ENCODE measurements at regions of chr5 and their contacts with region 1.

Region 1: DNA sequence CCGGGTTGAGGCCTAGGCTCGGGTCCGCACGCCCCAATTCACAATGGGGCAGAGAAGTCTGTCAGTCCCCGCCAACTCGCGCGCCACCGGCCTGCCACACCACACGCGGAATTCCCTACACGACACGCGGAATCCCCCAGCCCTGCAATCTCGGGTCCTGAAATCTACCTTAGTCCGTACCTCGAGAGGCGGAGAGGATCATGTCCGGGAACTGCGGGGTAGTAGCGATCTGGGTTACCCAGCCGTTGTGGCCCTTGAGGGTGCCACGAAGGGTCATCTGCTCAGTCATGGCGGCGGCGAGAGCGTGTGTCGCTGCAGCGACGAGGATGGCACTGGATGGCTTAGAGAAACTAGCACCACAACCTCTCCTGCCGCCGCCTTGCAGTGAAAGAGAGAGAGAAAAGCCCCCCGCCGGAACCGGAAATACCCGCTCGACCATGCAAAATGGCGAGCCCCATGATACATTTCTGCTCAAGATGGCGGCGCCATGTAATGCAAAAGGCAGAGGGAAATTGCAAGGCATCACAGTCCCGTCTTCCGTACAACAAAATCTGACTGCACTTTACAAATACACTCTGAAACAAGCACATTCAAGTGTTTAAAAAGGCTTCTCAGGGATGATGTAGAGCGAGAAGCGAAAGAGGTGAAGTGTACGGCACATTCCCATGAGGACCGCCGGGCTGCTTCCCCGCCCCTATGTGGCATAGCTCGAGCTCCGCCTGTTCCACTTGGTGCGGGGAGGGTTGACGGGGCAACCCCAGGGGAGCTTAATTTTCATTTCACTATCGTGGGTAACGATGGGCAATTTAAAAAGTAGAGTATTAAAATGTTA is at the start of gene RACK1:
- DNase-seq: peak; percentile 87 to 89
- ATAC-seq: peak; percentile 60 to 72
- H3K4me3 ChIP-seq: peak within 1 kb of the TSS; percentile 76 to 96 (median 80)
- H3K27ac ChIP-seq: peak within 1 kb of the TSS; percentile 94 to 99 (median 96)
- H3K4me1 ChIP-seq: peaks cover 39 to 50% of the 10 kb centered on the region in 2 donors
- H3K27me3 ChIP-seq: no peaks in the 10 kb centered on the region
- CTCF ChIP-seq: peak in 2 of 5 experiments; percentile 11 to 13
- POLR2A ChIP-seq: peak; percentile 79 to 81
- total RNA-seq, gene RACK1: 1,697 to 2,187 (median 1,957) TPM

Region 2: GRCh38 chr5:179732417-179732917 is 1511.3 kb before region 1 on chr5 and contains the start of gene MAML1:
- in situ Hi-C with region 1: no loop called
- intact Hi-C with region 1: loop called (anchors 5 kb)
- DNase-seq: peak; percentile 100
- ATAC-seq: peak; percentile 94 to 96
- H3K4me3 ChIP-seq: peak within 1 kb of the TSS; percentile 59 to 86 (median 72)
- H3K27ac ChIP-seq: peak within 1 kb of the TSS; percentile 79 to 97 (median 92)
- H3K4me1 ChIP-seq: peaks cover 37 to 40% of the 10 kb centered on the region in 2 donors
- H3K27me3 ChIP-seq: no peaks in the 10 kb centered on the region
- CTCF ChIP-seq: no peak
- POLR2A ChIP-seq: peak; percentile 63 to 77
- total RNA-seq, gene MAML1: 14.4 to 16.3 (median 15.1) TPM

Region 3: DNA sequence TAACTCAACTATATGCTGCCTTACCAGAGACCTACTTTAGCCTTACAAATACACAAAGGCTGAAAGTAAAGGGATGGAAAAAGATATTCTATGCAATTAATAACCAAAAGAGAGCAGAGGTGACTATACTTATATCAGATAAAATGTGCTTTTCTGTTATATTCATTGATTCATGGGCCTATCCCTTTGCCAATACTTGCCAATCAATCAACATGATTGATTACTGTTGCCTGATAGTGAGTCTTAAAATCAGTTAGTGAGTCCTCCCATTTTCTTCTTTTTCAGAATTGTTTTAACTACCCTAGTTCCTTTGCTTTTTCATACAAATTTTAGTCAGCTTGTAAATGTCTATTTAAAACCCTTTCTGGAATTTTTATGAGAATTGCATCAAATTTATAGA is 480.5 kb before region 1 on chr5:
- in situ Hi-C with region 1: no loop called
- intact Hi-C with region 1: no loop called
- DNase-seq: no peak
- ATAC-seq: no peak
- H3K4me3 ChIP-seq: no peak overlapping the region
- H3K27ac ChIP-seq: no peak overlapping the region
- H3K4me1 ChIP-seq: no peaks in the 10 kb centered on the region
- H3K27me3 ChIP-seq: no peaks in the 10 kb centered on the region
- CTCF ChIP-seq: no peak
- POLR2A ChIP-seq: no peak

Region 4: DNA sequence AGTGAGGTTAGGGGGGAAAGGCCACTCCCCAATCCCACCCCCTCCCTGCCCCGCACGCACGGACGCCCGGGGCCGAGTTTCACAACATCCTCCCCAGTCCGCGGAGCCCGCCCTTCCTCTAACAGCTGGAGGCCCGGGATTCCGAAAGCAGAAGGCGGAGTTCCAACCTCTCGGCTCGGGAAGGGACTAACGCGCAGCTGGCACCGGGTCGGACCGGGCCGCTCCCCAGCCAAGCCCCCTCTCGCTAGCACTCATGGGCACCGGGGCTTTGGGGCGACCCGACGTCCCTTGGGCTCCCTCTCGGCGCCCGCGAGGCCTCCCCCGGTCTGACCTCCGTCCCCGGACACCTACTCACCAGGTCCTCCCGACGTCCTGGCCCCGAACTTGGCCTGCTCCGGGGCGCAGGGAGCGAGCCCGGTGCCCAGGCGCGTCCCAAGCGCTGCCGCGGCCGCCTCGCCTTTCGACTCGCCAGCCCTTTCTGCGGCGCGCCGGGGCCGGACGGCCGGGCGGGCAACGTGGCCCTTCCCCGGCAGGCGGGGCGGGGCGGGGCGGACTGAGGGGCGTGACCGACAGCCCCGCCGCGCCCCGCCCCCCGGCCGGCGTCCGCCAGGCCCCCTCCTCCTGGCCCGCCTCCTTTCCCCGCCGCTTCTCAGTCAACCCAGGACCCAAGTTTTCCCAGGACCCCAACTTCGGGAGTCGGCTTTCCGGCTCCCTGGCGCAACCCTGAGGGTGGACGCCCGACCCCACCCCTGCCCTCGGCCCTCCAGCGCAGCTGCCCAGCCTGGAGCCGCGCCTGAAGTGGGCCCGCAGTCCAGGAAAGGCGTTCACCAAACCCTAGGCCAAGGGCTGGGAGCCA is 441.2 kb before region 1 on chr5 and contains the start of gene MGAT1:
- in situ Hi-C with region 1: no loop called
- intact Hi-C with region 1: loop called (anchors 5 kb)
- DNase-seq: peak; percentile 81 to 85
- ATAC-seq: peak; percentile 82
- H3K4me3 ChIP-seq: peak within 1 kb of the TSS; percentile 96 to 99 (median 96)
- H3K27ac ChIP-seq: peak within 1 kb of the TSS; percentile 94 to 100 (median 100)
- H3K4me1 ChIP-seq: peaks cover 83 to 92% of the 10 kb centered on the region in 2 donors
- H3K27me3 ChIP-seq: no peaks in the 10 kb centered on the region
- CTCF ChIP-seq: no peak
- POLR2A ChIP-seq: peak; percentile 93 to 95
- total RNA-seq, gene MGAT1: 100 to 138 (median 115) TPM

Region 5: GRCh38 chr5:181037365-181037861 is 206.3 kb before region 1 on chr5:
- in situ Hi-C with region 1: no loop called
- intact Hi-C with region 1: no loop called
- DNase-seq: no peak
- ATAC-seq: peak; percentile 23 to 56
- H3K4me3 ChIP-seq: peak overlapping the region in 1 of 4 donors; percentile 13
- H3K27ac ChIP-seq: peak overlapping the region in 2 of 4 donors; percentile 77 to 80
- H3K4me1 ChIP-seq: no peaks in the 10 kb centered on the region
- H3K27me3 ChIP-seq: no peaks in the 10 kb centered on the region
- CTCF ChIP-seq: no peak
- POLR2A ChIP-seq: peak; percentile 51 to 81

Region 6: GRCh38 chr5:181207214-181208107 is 36.3 kb before region 1 on chr5:
- in situ Hi-C with region 1: no loop called
- intact Hi-C with region 1: loop called (anchors 5 kb)
- DNase-seq: peak in 1 of 2 donors; percentile 65
- ATAC-seq: peak; percentile 12 to 15
- H3K4me3 ChIP-seq: peak overlapping the region; percentile 69 to 86 (median 80)
- H3K27ac ChIP-seq: peak overlapping the region; percentile 95 to 99 (median 97)
- H3K4me1 ChIP-seq: peaks cover 30 to 38% of the 10 kb centered on the region in 2 donors
- H3K27me3 ChIP-seq: no peaks in the 10 kb centered on the region
- CTCF ChIP-seq: no peak
- POLR2A ChIP-seq: peak in 1 of 2 donors; percentile 18

Region 7: GRCh38 chr5:181223058-181223728 is 20.5 kb before region 1 on chr5 and contains the start of gene TRIM41:
- in situ Hi-C with region 1: no loop called
- intact Hi-C with region 1: loop called (anchors 1 kb)
- DNase-seq: peak; percentile 98 to 99
- ATAC-seq: peak; percentile 82
- H3K4me3 ChIP-seq: peak within 1 kb of the TSS; percentile 76 to 95 (median 78)
- H3K27ac ChIP-seq: peak within 1 kb of the TSS; percentile 90 to 97 (median 92)
- H3K4me1 ChIP-seq: peaks cover 23 to 26% of the 10 kb centered on the region in 2 donors
- H3K27me3 ChIP-seq: no peaks in the 10 kb centered on the region
- CTCF ChIP-seq: peak in 1 of 5 experiments; percentile 3
- POLR2A ChIP-seq: peak; percentile 88 to 95
- total RNA-seq, gene TRIM41: 15.6 to 23.5 (median 21.6) TPM

Region 8: DNA sequence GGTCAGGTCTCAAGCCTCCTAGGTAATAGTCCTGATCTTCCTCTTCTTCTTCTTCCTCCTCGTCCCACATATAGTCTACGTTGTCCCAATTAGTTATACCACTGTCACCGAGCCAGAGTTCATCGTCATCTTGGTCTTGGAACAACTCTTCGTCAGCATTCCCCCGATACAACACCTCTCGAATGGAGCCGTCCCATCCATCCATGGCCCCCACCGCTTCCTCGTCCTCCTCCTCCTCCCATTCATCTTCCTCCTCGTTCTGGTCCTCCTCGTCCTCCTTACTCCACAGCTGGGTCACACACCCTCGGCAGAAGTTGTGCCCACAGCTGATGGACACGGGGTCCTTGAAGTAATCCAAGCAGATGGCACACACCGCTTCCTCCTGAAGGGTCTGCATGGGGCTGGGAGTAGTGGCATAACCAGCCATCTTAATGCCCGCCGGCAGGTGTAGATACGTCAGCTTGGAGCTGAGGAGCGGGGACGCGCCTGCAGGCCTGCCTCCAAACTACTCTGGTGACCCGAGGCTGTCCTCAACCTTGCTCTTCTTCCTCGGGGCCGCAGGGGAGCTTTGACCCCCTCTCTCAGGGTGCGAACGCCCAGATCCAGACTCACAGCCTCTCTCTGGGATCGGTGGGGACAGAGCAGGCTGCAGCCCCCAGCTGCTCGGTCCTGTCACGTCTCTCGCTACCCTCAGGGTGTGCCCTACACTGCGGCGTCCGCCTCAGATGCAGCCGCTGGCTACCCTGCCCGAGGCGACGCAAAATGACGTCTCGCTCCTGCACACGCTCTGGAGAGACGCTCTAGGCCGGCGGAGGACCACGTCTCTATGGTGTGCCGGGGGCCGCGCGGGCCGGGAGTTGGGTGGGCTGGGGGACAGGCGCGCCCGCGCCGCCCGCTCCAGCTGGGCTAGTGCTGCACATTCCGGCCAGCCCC is 16.9 kb after region 1 on chr5 and contains the start of gene TRIM52:
- in situ Hi-C with region 1: no loop called
- intact Hi-C with region 1: loop called (anchors 2 kb)
- DNase-seq: peak; percentile 89 to 92
- ATAC-seq: peak; percentile 81 to 89
- H3K4me3 ChIP-seq: peak within 1 kb of the TSS; percentile 88 to 100 (median 94)
- H3K27ac ChIP-seq: peak within 1 kb of the TSS; percentile 95 to 100 (median 99)
- H3K4me1 ChIP-seq: peaks cover 53 to 60% of the 10 kb centered on the region in 2 donors
- H3K27me3 ChIP-seq: no peaks in the 10 kb centered on the region
- CTCF ChIP-seq: no peak
- POLR2A ChIP-seq: peak; percentile 96
- total RNA-seq, gene TRIM52: 1.3 to 4.9 (median 3.4) TPM